Uterus (tissue), 4 donors: ENCODE measurements at regions of chr2 and their contacts with region 1.

Region 1: DNA sequence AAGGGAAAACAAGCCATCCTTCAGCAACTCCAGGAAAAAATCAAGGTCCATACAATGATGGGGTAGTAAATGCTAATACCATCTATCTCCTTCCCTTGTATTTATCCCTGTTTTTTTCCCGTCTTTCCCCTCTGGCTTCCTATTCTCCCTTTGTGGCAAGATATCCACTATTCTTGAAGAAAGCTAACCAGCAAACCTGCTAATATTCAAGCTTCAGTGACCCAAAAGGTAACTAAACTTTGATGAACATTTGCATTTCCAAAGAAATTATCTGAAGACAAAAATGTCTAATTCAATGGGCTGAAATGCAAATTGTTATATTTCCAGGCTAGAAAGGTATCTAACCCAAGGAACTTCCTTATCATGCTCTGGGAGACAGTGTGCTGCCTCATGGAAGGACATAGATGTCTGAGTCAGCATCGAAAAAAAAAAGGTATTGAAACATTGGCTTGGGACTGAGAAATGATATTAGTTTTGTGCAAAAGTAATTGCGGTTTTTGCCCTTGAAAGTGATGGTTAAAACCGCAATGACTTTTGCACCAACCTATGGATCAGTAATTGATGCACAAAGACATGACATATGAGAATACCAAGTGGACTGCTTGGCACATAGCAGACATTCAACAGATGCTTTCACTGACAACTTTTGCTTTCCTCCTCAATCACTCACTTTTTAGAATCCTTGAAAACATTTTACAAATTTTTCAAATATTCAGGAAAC is 63.7 kb upstream of the HNMT start:
- DNase-seq: no peak
- H3K4me3 ChIP-seq: no peak overlapping the region
- H3K27ac ChIP-seq: no peak overlapping the region
- H3K4me1 ChIP-seq: no peaks in the 10 kb centered on the region
- H3K27me3 ChIP-seq: no peaks in the 10 kb centered on the region
- CTCF ChIP-seq: no peak
- POLR2A ChIP-seq: no peak

Region 2: GRCh38 chr2:138827426-138828054 is 927.0 kb after region 1 on chr2:
- intact Hi-C with region 1: loop called (anchors 10 kb)
- DNase-seq: peak in 1 of 2 donors; percentile 21
- H3K4me3 ChIP-seq: no peak overlapping the region
- H3K27ac ChIP-seq: no peak overlapping the region
- H3K4me1 ChIP-seq: no peaks in the 10 kb centered on the region
- H3K27me3 ChIP-seq: no peaks in the 10 kb centered on the region
- CTCF ChIP-seq: peak; percentile 60 to 68 (median 60)
- POLR2A ChIP-seq: no peak